ENCODE measurements at regions of chr14 and their contacts with region 1.

Region 1: DNA sequence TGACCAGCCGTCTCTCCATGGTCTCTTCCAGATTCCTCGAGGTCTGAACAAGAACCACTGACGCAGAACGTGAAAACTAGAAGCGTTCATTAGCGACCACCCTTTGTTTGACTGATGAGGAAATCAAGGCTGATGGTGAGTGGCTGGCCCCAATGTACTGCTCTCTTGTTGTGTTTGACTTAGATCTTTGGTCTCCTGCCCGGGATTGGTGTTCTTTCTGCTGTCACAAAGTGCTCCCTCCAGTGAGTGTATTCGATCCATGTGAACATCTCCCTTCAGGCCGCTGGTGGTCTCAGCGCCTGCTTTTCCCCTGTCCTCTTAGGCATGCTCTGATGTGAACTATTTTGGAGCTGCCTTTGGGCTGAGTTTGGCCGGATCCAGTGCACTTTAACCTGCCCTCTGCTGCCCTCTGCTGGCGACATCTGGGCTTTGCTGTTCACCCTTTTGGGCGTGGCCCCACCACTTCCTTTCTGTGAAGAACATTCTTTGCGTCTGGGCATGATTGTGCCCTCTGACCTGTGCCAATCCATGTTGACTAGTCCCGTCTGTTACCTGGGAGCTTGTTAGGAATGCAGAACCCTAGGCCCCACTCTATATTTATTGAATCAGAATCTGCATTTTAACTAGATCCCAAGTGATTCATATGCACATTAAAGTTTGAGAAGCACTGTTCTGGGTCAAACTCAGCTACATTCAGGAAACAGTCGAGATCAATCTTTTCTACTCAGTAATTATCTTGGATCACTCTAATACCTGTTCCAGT is 279.2 kb downstream of the TTC6 start:
- H3K4me3 Mint-ChIP-seq: no peak overlapping the region
- H3K27ac Mint-ChIP-seq: no peak overlapping the region
- H3K4me1 Mint-ChIP-seq: peaks cover 7% of the 10 kb centered on the region
- H3K27me3 Mint-ChIP-seq: no peaks in the 10 kb centered on the region

Region 2: GRCh38 chr14:37246427-37246914 is 628.1 kb before region 1 on chr14:
- intact Hi-C with region 1: loop called (anchors 1 kb)
- H3K4me3 Mint-ChIP-seq: no peak overlapping the region
- H3K27ac Mint-ChIP-seq: no peak overlapping the region
- H3K4me1 Mint-ChIP-seq: no peaks in the 10 kb centered on the region
- H3K27me3 Mint-ChIP-seq: no peaks in the 10 kb centered on the region

Region 3: GRCh38 chr14:37843954-37844607 is 30.5 kb before region 1 on chr14:
- intact Hi-C with region 1: no loop called
- H3K4me3 Mint-ChIP-seq: no peak overlapping the region
- H3K27ac Mint-ChIP-seq: no peak overlapping the region
- H3K4me1 Mint-ChIP-seq: no peaks in the 10 kb centered on the region
- H3K27me3 Mint-ChIP-seq: no peaks in the 10 kb centered on the region

Measured in dendritic cell treated with granulocyte-macrophage colony-stimulating factor and Interleukin-4, amounts not matched to agents 40 ng/mL and 50 ng/mL, for 4 days (primary cell).